Calu3 (cell line): ENCODE measurements at regions of chr5 and their contacts with region 1.

Region 1: GRCh38 chr5:141040771-141041426 is 10.3 kb upstream of the PCDHB1 start:
- DNase-seq: peak; percentile 98
- H3K4me3 Mint-ChIP-seq: no peak overlapping the region
- H3K27ac Mint-ChIP-seq: no peak overlapping the region
- H3K4me1 Mint-ChIP-seq: no peaks in the 10 kb centered on the region
- H3K27me3 Mint-ChIP-seq: no peaks in the 10 kb centered on the region
- CTCF ChIP-seq: peak; percentile 93

Region 2: DNA sequence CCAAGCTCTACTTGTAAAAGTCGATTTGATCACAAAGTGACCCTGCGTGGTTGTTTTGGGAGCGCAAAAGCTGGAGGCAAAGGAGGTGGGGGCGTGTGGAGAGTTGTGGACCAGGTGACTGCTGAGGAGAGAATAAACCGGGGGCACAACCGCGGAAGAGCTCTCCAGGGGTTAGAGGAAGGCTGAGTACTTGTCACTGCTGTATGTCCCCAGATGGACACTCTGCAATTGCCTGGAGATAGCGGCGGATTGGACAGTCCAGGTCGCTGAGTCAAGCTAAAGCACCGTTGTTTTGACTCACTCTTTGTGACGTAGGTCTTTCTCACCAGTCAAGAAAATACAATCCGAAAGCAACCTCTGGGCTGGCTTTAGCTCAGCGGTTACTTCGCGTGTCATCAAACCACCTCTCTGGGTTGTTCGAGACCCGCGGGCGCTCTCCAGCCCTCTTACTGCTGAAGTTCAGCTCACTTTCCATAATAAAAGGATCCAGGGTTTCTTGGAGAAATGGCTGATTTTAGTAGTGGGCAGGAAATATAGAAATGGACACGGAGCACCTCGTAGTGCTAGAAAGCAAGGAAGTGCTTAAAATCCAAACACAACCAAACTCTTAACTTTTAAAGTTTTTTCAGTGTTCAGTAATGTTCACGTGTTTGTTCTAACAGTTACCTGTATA is 315.0 kb before region 1 on chr5:
- CTCF ChIA-PET with region 1: no interaction called
- intact Hi-C with region 1: loop called (anchors 1 kb)
- DNase-seq: peak; percentile 89
- H3K4me3 Mint-ChIP-seq: peak overlapping the region; percentile 68
- H3K27ac Mint-ChIP-seq: peak overlapping the region; percentile 99
- H3K4me1 Mint-ChIP-seq: peaks cover 16% of the 10 kb centered on the region
- H3K27me3 Mint-ChIP-seq: no peaks in the 10 kb centered on the region
- CTCF ChIP-seq: no peak

Region 3: GRCh38 chr5:140842798-140843733 is 197.8 kb before region 1 on chr5:
- CTCF ChIA-PET with region 1: no interaction called
- intact Hi-C with region 1: loop called (anchors 1 kb)
- DNase-seq: no peak
- H3K4me3 Mint-ChIP-seq: no peak overlapping the region
- H3K27ac Mint-ChIP-seq: no peak overlapping the region
- H3K4me1 Mint-ChIP-seq: no peaks in the 10 kb centered on the region
- H3K27me3 Mint-ChIP-seq: no peaks in the 10 kb centered on the region
- CTCF ChIP-seq: no peak

Region 4: GRCh38 chr5:140875066-140876065 is 165.5 kb before region 1 on chr5 and contains the start of gene PCDHA12:
- CTCF ChIA-PET with region 1: interaction called, 4 read pairs
- intact Hi-C with region 1: loop called (anchors 2 kb)
- DNase-seq: no peak
- H3K4me3 Mint-ChIP-seq: no peak within 1 kb of the TSS
- H3K27ac Mint-ChIP-seq: no peak within 1 kb of the TSS
- H3K4me1 Mint-ChIP-seq: no peaks in the 10 kb centered on the region
- H3K27me3 Mint-ChIP-seq: no peaks in the 10 kb centered on the region
- CTCF ChIP-seq: no peak
- total RNA-seq, gene PCDHA12: 0.64 and 0.78 TPM in 2 replicates

Region 5: GRCh38 chr5:140926443-140927227 is 114.3 kb before region 1 on chr5:
- CTCF ChIA-PET with region 1: interaction called, 33 read pairs
- intact Hi-C with region 1: loop called (anchors 1 kb)
- DNase-seq: peak; percentile 76
- H3K4me3 Mint-ChIP-seq: peak overlapping the region; percentile 76
- H3K27ac Mint-ChIP-seq: no peak overlapping the region
- H3K4me1 Mint-ChIP-seq: no peaks in the 10 kb centered on the region
- H3K27me3 Mint-ChIP-seq: no peaks in the 10 kb centered on the region
- CTCF ChIP-seq: peak; percentile 31

Region 6: GRCh38 chr5:141001854-141002604 is 38.9 kb before region 1 on chr5:
- CTCF ChIA-PET with region 1: interaction called, 17 read pairs
- intact Hi-C with region 1: loop called (anchors 1 kb)
- DNase-seq: peak; percentile 25
- H3K4me3 Mint-ChIP-seq: peak overlapping the region; percentile 70
- H3K27ac Mint-ChIP-seq: peak overlapping the region; percentile 98
- H3K4me1 Mint-ChIP-seq: peaks cover 49% of the 10 kb centered on the region
- H3K27me3 Mint-ChIP-seq: no peaks in the 10 kb centered on the region
- CTCF ChIP-seq: no peak

Region 7: GRCh38 chr5:141077826-141078225 is 36.9 kb after region 1 on chr5:
- CTCF ChIA-PET with region 1: no interaction called
- intact Hi-C with region 1: no loop called
- DNase-seq: no peak
- H3K4me3 Mint-ChIP-seq: no peak overlapping the region
- H3K27ac Mint-ChIP-seq: no peak overlapping the region
- H3K4me1 Mint-ChIP-seq: no peaks in the 10 kb centered on the region
- H3K27me3 Mint-ChIP-seq: no peaks in the 10 kb centered on the region
- CTCF ChIP-seq: no peak

Region 8: DNA sequence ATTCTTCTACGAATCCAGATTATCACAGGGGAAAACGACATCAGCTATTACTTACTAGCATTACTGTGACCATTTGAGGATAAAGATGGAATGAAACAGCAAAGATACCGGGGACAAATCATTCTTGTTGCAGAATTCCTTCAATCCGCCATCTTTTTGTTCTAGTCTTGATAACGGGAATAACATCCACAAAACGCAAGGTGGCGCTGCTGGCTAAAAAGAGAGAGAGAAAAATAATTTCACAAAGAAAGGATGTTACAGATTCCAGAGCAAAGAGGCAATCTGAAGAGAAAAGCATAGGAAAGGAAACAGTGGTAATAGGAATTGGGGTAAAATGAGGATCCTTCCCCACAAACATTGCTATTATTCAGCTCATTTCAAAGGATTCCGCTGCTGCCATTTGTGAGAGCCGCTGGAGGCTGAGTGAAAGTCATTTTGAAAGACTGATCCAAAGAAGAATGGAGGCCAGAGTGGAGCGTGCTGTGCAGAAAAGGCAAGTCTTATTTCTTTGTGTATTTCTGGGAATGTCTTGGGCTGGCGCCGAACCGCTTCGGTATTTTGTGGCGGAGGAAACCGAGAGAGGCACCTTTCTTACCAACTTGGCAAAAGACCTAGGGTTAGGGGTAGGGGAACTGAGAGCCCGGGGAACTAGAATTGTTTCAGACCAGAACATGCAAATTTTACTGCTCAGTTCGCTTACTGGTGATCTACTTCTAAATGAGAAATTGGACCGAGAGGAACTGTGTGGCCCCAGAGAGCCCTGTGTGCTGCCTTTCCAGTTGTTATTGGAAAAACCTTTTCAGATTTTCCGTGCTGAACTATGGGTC is 131.7 kb after region 1 on chr5 and contains the start of gene PCDHB7:
- CTCF ChIA-PET with region 1: no interaction called
- intact Hi-C with region 1: no loop called
- DNase-seq: no peak
- H3K4me3 Mint-ChIP-seq: no peak within 1 kb of the TSS
- H3K27ac Mint-ChIP-seq: no peak within 1 kb of the TSS
- H3K4me1 Mint-ChIP-seq: no peaks in the 10 kb centered on the region
- H3K27me3 Mint-ChIP-seq: no peaks in the 10 kb centered on the region
- CTCF ChIP-seq: peak; percentile 14
- total RNA-seq, gene PCDHB7: 0.26 and 0.37 TPM in 2 replicates